ENCODE measurements at regions of chr12 and their contacts with region 1.

Region 1: DNA sequence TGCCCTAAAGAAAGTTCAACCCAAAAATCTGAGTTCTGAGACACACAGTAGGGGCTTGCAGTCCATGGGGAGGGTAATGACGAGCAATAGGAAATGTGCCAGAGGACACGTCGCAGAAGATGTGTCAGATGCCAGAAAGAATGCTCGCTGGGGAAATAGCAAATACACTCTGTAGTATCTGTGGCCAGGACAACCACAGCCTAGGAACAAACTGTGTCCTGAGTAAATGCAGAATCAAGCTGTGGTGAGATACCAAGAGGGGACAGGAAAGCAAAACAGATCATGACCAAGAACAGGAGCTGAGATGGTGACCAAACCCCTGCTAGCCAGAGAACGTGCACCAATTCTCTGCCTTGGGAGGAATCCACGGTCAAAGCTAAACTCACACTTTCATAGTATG is 9.1 kb downstream of the CRACR2A start:
- DNase-seq: no peak
- ATAC-seq: no peak
- H3K4me3 ChIP-seq: no peak overlapping the region
- H3K4me3 Mint-ChIP-seq: no peak overlapping the region
- H3K27ac ChIP-seq: no peak overlapping the region
- H3K27ac Mint-ChIP-seq: peak overlapping the region; percentile 68
- H3K4me1 ChIP-seq: peaks cover 15% of the 10 kb centered on the region
- H3K4me1 Mint-ChIP-seq: peaks cover 62% of the 10 kb centered on the region
- H3K27me3 ChIP-seq: no peaks in the 10 kb centered on the region
- H3K27me3 Mint-ChIP-seq: no peaks in the 10 kb centered on the region
- CTCF ChIP-seq: no peak

Region 2: DNA sequence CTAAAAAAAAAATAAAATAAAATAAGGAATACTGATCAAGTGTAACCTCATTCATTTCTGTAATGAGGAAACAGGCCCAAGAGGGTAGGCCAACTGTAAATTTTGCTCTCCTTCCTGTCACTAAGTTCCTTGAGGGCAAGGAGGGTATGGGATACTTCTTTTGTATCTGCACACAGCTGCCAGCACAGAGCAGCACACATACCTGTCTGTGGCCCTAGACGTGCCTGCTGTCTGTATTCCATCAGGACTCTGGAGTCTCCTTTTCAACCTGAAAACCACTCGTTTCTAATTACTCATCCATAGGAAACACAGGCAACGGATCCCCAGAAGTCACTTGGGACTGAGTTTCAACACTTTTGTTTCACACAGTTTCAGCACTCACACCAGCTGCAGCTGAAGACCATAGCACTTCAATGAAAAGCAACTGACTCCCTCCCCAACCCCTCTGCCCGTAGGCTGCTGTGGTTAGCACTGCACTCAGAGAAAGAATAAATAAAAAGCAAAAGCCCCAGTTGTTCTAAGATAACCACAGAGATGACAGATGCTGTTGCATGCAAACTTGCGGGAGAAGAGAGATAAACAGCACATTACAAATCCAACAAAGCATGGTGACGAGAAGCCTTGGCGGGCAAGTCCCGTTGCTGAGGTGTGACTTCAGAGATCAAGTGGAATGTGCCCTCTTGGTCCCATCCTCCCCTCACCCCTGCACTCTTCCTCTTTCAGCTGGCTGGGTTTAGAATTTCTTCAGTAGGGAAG is 15.7 kb before region 1 on chr12:
- CTCF ChIA-PET with region 1: interaction called, 6 read pairs
- POLR2A ChIA-PET with region 1: interaction called, 6 read pairs
- intact Hi-C with region 1: loop called in 1 of 2 experiments (anchors 2 kb)
- DNase-seq: peak in 8 of 9 experiments; percentile 17 to 90 (median 44)
- ATAC-seq: peak; percentile 81
- H3K4me3 ChIP-seq: peak overlapping the region in 1 of 2 experiments; percentile 9
- H3K4me3 Mint-ChIP-seq: peak overlapping the region; percentile 60
- H3K27ac ChIP-seq: peak overlapping the region; percentile 37 to 71
- H3K27ac Mint-ChIP-seq: peak overlapping the region; percentile 89
- H3K4me1 ChIP-seq: peaks cover 34% of the 10 kb centered on the region
- H3K4me1 Mint-ChIP-seq: peaks cover 35% of the 10 kb centered on the region
- H3K27me3 ChIP-seq: no peaks in the 10 kb centered on the region
- H3K27me3 Mint-ChIP-seq: no peaks in the 10 kb centered on the region
- CTCF ChIP-seq: no peak

Region 3: DNA sequence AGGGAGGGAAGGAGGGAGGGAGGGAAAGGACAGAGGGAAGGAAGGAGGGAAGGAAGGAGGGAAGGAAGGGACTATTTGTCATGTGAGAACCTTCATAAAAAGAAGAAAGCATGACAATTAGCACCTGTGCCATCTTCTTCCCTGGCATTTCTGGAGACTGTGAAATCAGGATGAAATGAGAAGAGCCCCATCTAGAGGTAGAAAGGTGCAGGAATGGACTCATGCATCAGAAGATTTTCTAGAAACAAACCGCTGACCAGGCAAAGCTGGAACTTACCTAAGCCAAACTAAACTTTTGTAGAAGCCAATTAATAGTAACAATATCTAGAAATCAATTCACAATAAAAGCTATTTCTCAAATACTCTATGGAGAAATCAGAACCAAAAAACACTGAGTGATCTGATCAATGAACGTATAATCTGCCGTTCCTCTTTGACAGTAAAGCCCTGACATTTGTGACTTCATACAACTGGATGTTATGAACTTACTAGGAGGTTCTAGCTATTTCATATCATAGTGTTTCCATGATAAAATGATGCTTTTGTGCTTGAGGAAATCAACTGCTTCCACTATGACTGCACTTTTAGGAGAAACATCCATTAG is 33.5 kb after region 1 on chr12:
- CTCF ChIA-PET with region 1: interaction called, 4 read pairs
- POLR2A ChIA-PET with region 1: no interaction called
- intact Hi-C with region 1: loop called in 1 of 2 experiments (anchors 2 kb)
- DNase-seq: peak in 3 of 9 experiments; percentile 7 to 63 (median 54)
- ATAC-seq: peak; percentile 57
- H3K4me3 ChIP-seq: no peak overlapping the region
- H3K4me3 Mint-ChIP-seq: no peak overlapping the region
- H3K27ac ChIP-seq: no peak overlapping the region
- H3K27ac Mint-ChIP-seq: no peak overlapping the region
- H3K4me1 ChIP-seq: no peaks in the 10 kb centered on the region
- H3K4me1 Mint-ChIP-seq: peaks cover 4% of the 10 kb centered on the region
- H3K27me3 ChIP-seq: no peaks in the 10 kb centered on the region
- H3K27me3 Mint-ChIP-seq: no peaks in the 10 kb centered on the region
- CTCF ChIP-seq: peak; percentile 71

Region 4: DNA sequence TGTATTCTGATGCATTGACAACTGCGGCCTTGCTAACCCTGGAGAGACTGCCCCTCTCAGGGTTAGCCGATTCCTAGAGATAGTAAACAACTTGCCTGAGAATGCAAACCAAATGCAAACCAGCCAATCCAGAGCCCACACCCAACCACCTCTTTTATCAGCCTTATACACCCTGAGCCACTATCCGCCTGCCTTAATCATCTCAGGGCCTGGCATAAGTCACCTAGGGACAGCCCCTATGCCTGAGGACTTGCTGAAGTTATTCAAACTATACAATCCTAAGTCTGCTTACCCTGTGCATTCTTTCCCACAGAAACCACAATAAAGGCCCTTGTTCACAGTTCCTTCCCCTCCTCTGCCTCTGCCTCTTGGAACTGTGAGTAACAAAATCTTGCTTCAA is 1477.0 kb after region 1 on chr12:
- CTCF ChIA-PET with region 1: no interaction called
- POLR2A ChIA-PET with region 1: no interaction called
- intact Hi-C with region 1: no loop called
- DNase-seq: peak in 1 of 9 experiments; percentile 5
- ATAC-seq: no peak
- H3K4me3 ChIP-seq: no peak overlapping the region
- H3K4me3 Mint-ChIP-seq: no peak overlapping the region
- H3K27ac ChIP-seq: no peak overlapping the region
- H3K27ac Mint-ChIP-seq: no peak overlapping the region
- H3K4me1 ChIP-seq: no peaks in the 10 kb centered on the region
- H3K4me1 Mint-ChIP-seq: peaks cover 11% of the 10 kb centered on the region
- H3K27me3 ChIP-seq: no peaks in the 10 kb centered on the region
- H3K27me3 Mint-ChIP-seq: peaks cover 9% of the 10 kb centered on the region
- CTCF ChIP-seq: no peak